ENCODE measurements at regions of chr14 and their contacts with region 1.

Region 1: GRCh38 chr14:105375635-105376057 is 22.7 kb upstream of the TEX22 start:
- DNase-seq: peak in 2 of 3 donors; percentile 76 to 85
- H3K4me3 ChIP-seq: no peak overlapping the region
- H3K27ac ChIP-seq: no peak overlapping the region
- H3K4me1 ChIP-seq: peaks cover 0 to 16% (median 13%) of the 10 kb centered on the region in 4 experiments
- H3K27me3 ChIP-seq: no peaks in the 10 kb centered on the region

Region 2: GRCh38 chr14:105389976-105390848 is 14.6 kb after region 1 on chr14:
- CTCF ChIA-PET with region 1: interaction called, 24 read pairs
- POLR2A ChIA-PET with region 1: interaction called, 3 read pairs
- DNase-seq: peak in 2 of 3 donors; percentile 48 to 59
- H3K4me3 ChIP-seq: peak overlapping the region in 3 of 7 experiments; percentile 1 to 33 (median 12)
- H3K27ac ChIP-seq: peak overlapping the region in 1 of 2 experiments; percentile 38
- H3K4me1 ChIP-seq: peaks cover 0 to 36% (median 25%) of the 10 kb centered on the region in 4 experiments
- H3K27me3 ChIP-seq: no peaks in the 10 kb centered on the region

Region 3: DNA sequence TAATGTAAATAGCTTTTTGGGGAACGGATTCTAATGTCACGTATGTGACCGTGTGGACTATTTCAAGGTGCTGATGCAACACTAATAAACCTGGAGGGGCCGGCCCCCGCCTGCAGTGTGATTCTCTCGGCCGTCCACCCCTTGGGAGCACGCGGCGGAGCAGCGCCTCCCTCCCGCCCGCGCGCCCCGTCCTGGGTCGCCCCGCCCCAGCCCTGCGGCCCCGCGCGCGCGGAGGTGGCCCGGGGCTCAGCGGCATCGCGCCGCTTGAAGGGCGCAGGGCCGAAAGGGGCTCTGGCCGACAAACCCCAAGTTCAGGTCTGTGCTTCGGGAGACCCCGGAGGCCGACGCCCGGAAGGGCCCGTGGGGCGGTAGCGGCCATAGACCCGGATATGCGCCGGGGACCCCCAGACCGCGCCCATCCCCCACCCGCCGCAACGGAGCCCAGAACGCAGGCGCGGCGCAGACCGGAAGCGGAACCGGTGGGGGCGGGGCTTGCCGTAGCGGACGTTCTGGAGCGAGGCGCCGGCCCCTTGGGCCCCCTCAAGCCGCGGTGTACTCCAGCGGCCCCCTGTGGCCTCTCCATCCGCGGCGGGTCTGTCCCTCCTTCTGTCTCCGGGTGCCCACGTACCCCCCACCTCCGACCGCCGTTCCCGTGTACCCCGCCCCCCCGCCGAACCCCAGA is 22.5 kb after region 1 on chr14 and contains the start of gene TEX22:
- CTCF ChIA-PET with region 1: interaction called, 24 read pairs
- POLR2A ChIA-PET with region 1: no interaction called
- DNase-seq: peak; percentile 85 to 93 (median 92)
- H3K4me3 ChIP-seq: peak within 1 kb of the TSS; percentile 49 to 83 (median 72)
- H3K27ac ChIP-seq: peak within 1 kb of the TSS; percentile 77 to 87
- H3K4me1 ChIP-seq: peaks cover 0 to 47% (median 31%) of the 10 kb centered on the region in 4 experiments
- H3K27me3 ChIP-seq: no peaks in the 10 kb centered on the region

Region 4: GRCh38 chr14:105448706-105449111 is 73.1 kb after region 1 on chr14:
- CTCF ChIA-PET with region 1: interaction called, 15 read pairs
- POLR2A ChIA-PET with region 1: no interaction called
- DNase-seq: peak; percentile 52 to 76 (median 71)
- H3K4me3 ChIP-seq: no peak overlapping the region
- H3K27ac ChIP-seq: no peak overlapping the region
- H3K4me1 ChIP-seq: no peaks in the 10 kb centered on the region
- H3K27me3 ChIP-seq: no peaks in the 10 kb centered on the region

Region 5: GRCh38 chr14:105490572-105491366 is 115.1 kb after region 1 on chr14 and contains the start of gene TEDC1:
- CTCF ChIA-PET with region 1: interaction called, 68 read pairs
- POLR2A ChIA-PET with region 1: interaction called, 5 read pairs
- DNase-seq: peak; percentile 100
- H3K4me3 ChIP-seq: peak within 1 kb of the TSS; percentile 58 to 83 (median 75)
- H3K27ac ChIP-seq: peak within 1 kb of the TSS; percentile 70 to 88
- H3K4me1 ChIP-seq: peaks cover 0 to 55% (median 52%) of the 10 kb centered on the region in 4 experiments
- H3K27me3 ChIP-seq: peaks cover 0 to 29% (median 5%) of the 10 kb centered on the region in 5 experiments

Region 6: GRCh38 chr14:105527661-105528581 is 152.3 kb after region 1 on chr14:
- CTCF ChIA-PET with region 1: interaction called, 10 read pairs
- POLR2A ChIA-PET with region 1: no interaction called
- DNase-seq: peak; percentile 66 to 81 (median 78)
- H3K4me3 ChIP-seq: peak overlapping the region; percentile 13 to 80 (median 63)
- H3K27ac ChIP-seq: no peak overlapping the region
- H3K4me1 ChIP-seq: peaks cover 0 to 45% (median 31%) of the 10 kb centered on the region in 4 experiments
- H3K27me3 ChIP-seq: peaks cover 0 to 45% (median 19%) of the 10 kb centered on the region in 5 experiments

Measured in common myeloid progenitor, CD34-positive (primary cell).